ENCODE measurements at regions of chr2 and their contacts with region 1.

Region 1: DNA sequence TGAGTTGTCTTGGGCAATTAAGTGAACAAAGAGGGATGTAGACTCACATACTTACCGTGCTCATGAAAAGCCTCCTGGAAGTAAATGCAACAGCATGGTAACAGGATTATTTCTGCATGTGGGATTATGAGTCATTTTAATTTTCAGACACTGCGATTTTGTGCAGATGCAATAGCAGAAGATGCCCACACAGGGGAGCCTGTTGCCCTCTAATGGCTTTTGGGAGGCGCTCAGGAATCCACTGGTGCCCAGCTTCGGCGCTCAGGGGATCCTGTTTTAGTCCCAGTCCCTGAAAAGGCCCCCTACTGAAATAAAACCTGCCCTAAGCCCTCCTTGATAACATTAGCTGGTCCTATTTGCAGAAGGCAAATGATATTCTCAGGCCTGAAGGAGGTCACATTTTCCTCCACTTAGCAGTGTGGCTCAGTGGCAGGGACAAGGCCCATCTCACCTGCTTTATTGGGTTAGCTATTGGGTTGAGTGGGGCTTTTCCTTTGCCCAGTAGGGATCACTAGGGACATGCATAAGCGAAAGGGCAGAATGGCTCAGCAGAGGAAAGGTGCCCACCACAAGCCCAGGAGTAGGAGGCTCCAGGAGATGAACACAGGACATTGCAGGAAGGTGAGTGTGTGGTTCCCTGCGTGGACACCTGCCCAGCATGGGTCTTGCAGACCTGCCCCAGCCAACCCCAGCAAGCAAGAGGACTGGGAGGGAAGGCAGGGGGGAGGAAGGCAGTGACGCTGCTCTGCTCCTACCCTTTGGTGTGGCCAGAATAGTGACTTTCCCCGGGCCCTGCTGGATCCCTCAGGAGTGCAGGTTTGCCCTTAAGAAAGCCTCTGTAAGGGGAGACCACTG is 26.5 kb upstream of the KCNS3 start:
- DNase-seq: peak in 1 of 2 donors; percentile 80
- H3K4me3 ChIP-seq: no peak overlapping the region
- H3K27ac ChIP-seq: no peak overlapping the region
- H3K4me1 ChIP-seq: no peaks in the 10 kb centered on the region
- H3K27me3 ChIP-seq: no peaks in the 10 kb centered on the region
- CTCF ChIP-seq: peak; percentile 69 to 74 (median 71)
- POLR2A ChIP-seq: no peak

Region 2: GRCh38 chr2:16608661-16609643 is 1243.0 kb before region 1 on chr2:
- intact Hi-C with region 1: no loop called
- DNase-seq: no peak
- H3K4me3 ChIP-seq: peak overlapping the region; percentile 21 to 38
- H3K27ac ChIP-seq: peak overlapping the region; percentile 12
- H3K4me1 ChIP-seq: peaks cover 31% of the 10 kb centered on the region
- H3K27me3 ChIP-seq: no peaks in the 10 kb centered on the region
- CTCF ChIP-seq: peak; percentile 77 to 96 (median 91)
- POLR2A ChIP-seq: no peak

Region 3: GRCh38 chr2:18149645-18150246 is 297.8 kb after region 1 on chr2:
- intact Hi-C with region 1: loop called (anchors 10 kb)
- DNase-seq: no peak
- H3K4me3 ChIP-seq: no peak overlapping the region
- H3K27ac ChIP-seq: no peak overlapping the region
- H3K4me1 ChIP-seq: no peaks in the 10 kb centered on the region
- H3K27me3 ChIP-seq: no peaks in the 10 kb centered on the region
- CTCF ChIP-seq: peak in 2 of 3 experiments; percentile 50 to 60
- POLR2A ChIP-seq: no peak